Dendritic cell treated with granulocyte-macrophage colony-stimulating factor and Interleukin-4, amounts not matched to agents 40 ng/mL and 50 ng/mL, for 4 days (primary cell): ENCODE measurements at regions of chr4 and their contacts with region 1.

Region 1: DNA sequence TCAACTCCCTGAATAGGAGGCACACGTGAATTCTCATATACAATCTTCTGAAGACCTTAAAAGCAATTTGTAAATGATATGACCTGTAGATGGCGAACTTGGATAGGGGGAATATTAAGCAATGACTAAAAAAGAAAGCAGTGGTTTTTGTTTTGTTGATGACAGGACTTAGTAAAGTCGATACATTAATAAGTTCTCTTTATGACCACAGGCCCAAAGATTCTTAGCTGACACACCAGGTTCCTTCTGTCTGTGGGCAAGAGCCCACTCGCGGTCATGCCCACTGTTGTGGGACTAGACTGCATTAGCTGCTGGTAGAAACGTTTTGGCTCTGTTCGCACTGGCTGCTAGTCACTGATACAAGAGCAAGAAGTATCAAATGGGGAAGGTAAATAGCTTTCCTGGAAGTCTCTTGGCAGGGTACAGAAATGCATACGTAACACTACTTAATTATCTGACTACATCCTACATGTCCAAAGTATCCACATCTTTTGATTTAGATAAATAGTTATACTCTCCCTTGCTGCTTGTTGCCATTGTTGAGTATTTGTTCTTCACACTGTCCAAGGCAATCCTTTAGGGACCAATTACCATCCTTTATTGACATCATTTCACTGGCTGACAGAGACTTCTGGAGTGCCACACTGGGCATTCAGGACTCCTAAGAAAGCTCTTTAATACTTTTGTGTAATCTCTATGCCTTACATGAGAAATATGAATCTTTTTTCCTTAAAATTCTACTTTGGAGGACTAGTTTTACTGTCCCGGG is 31.0 kb downstream of the ALPK1 start:
- H3K4me3 Mint-ChIP-seq: no peak overlapping the region
- H3K27ac Mint-ChIP-seq: no peak overlapping the region
- H3K4me1 Mint-ChIP-seq: peaks cover 35% of the 10 kb centered on the region
- H3K27me3 Mint-ChIP-seq: no peaks in the 10 kb centered on the region

Region 2: GRCh38 chr4:112523764-112524505 is 195.8 kb after region 1 on chr4:
- intact Hi-C with region 1: loop called (anchors 1 kb)
- H3K4me3 Mint-ChIP-seq: peak overlapping the region; percentile 80
- H3K27ac Mint-ChIP-seq: peak overlapping the region; percentile 12
- H3K4me1 Mint-ChIP-seq: peaks cover 37% of the 10 kb centered on the region
- H3K27me3 Mint-ChIP-seq: peaks cover 81% of the 10 kb centered on the region

Region 3: GRCh38 chr4:112604589-112604988 is 276.4 kb after region 1 on chr4:
- intact Hi-C with region 1: loop called (anchors 1 kb)
- H3K4me3 Mint-ChIP-seq: no peak overlapping the region
- H3K27ac Mint-ChIP-seq: no peak overlapping the region
- H3K4me1 Mint-ChIP-seq: no peaks in the 10 kb centered on the region
- H3K27me3 Mint-ChIP-seq: no peaks in the 10 kb centered on the region

Region 4: GRCh38 chr4:112616984-112617383 is 288.8 kb after region 1 on chr4:
- intact Hi-C with region 1: no loop called
- H3K4me3 Mint-ChIP-seq: no peak overlapping the region
- H3K27ac Mint-ChIP-seq: no peak overlapping the region
- H3K4me1 Mint-ChIP-seq: no peaks in the 10 kb centered on the region
- H3K27me3 Mint-ChIP-seq: no peaks in the 10 kb centered on the region

Region 5: DNA sequence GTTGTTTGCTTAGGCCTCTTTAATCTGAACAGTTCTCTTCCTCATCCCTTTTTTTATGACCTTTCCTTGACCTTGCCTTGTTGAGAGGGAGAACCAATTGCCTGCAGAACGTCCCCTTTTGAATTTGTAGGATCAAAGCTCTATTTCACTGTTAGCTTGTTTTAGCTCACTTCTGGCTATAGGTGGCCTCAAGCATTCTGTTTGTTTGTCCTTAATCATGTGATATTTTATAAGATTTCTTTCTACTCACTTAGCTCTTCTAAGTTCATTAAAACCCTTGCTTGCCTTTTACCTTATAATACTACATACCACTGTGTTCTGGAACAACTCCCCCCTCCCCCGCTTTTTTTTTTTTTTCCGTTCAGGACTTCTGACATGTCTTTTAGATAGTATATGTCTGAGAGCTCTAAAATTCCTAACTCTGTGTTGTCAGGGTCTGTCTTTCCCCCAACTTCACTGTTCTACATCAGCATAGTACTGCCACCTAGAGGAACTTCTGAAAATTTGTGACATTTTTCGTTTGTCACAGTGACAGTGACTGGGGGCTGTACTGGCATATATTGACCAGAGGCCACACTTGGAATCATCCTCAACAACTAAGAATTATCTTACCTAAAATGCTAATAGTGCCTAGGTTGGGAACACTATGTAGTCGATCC is 437.3 kb after region 1 on chr4:
- intact Hi-C with region 1: loop called (anchors 2 kb)
- H3K4me3 Mint-ChIP-seq: no peak overlapping the region
- H3K27ac Mint-ChIP-seq: no peak overlapping the region
- H3K4me1 Mint-ChIP-seq: peaks cover 5% of the 10 kb centered on the region
- H3K27me3 Mint-ChIP-seq: no peaks in the 10 kb centered on the region